Activated T-helper 2 cell treated with anti-CD3 and anti-CD28 coated beads, Interferon-gamma antibody, Interleukin-2, Interleukin-4, amounts not matched to agents 10 μg/mL and 5 μg/mL and 100 μg/mL, durations not matched to agents 14 hours and 24 hours and 36 hours (primary cell): ENCODE measurements at regions of chr6 and their contacts with region 1.

Region 1: GRCh38 chr6:130885392-130886192 is 58.4 kb downstream of the SMLR1 start:
- DNase-seq: peak; percentile 35
- H3K4me3 Mint-ChIP-seq: no peak overlapping the region
- H3K27ac Mint-ChIP-seq: no peak overlapping the region
- H3K4me1 Mint-ChIP-seq: no peaks in the 10 kb centered on the region
- H3K27me3 Mint-ChIP-seq: peaks cover 1% of the 10 kb centered on the region

Region 2: DNA sequence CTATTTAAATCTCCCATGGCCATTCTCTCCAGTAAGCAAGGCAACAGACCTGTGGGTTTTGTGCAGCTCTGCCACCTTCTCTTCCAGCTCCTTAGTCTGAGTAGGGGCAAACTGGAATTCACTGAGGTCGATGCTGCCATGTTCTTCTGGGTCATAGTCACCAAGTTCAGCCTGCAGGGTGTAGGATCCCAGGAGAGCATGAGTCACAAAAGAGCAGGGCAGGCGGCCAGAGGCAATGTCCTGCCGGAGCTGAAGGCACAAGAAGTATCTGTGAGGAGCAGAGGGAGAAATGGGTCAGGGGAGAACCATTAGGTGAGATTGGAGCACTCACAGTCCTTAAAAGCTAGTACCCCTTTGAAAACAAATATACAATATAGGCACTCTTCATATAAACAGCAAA is 15.3 kb after region 1 on chr6:
- intact Hi-C with region 1: no loop called
- DNase-seq: no peak
- H3K4me3 Mint-ChIP-seq: no peak overlapping the region
- H3K27ac Mint-ChIP-seq: no peak overlapping the region
- H3K4me1 Mint-ChIP-seq: no peaks in the 10 kb centered on the region
- H3K27me3 Mint-ChIP-seq: peaks cover 1% of the 10 kb centered on the region

Region 3: GRCh38 chr6:131116749-131117360 is 231.3 kb after region 1 on chr6:
- intact Hi-C with region 1: loop called (anchors 1 kb)
- DNase-seq: no peak
- H3K4me3 Mint-ChIP-seq: no peak overlapping the region
- H3K27ac Mint-ChIP-seq: no peak overlapping the region
- H3K4me1 Mint-ChIP-seq: peaks cover 1% of the 10 kb centered on the region
- H3K27me3 Mint-ChIP-seq: peaks cover 3% of the 10 kb centered on the region